ENCODE measurements at regions of chr4 and their contacts with region 1.

Region 1: GRCh38 chr4:12633053-12633651 is 851.0 kb downstream of the RAB28 start:
- DNase-seq: peak; percentile 85
- H3K4me3 ChIP-seq: no peak overlapping the region
- H3K27ac ChIP-seq: no peak overlapping the region
- H3K4me1 ChIP-seq: no peaks in the 10 kb centered on the region
- H3K27me3 ChIP-seq: no peaks in the 10 kb centered on the region
- CTCF ChIP-seq: peak; percentile 80 to 91 (median 89)
- EP300 ChIP-seq: no peak
- POLR2A ChIP-seq: no peak

Region 2: DNA sequence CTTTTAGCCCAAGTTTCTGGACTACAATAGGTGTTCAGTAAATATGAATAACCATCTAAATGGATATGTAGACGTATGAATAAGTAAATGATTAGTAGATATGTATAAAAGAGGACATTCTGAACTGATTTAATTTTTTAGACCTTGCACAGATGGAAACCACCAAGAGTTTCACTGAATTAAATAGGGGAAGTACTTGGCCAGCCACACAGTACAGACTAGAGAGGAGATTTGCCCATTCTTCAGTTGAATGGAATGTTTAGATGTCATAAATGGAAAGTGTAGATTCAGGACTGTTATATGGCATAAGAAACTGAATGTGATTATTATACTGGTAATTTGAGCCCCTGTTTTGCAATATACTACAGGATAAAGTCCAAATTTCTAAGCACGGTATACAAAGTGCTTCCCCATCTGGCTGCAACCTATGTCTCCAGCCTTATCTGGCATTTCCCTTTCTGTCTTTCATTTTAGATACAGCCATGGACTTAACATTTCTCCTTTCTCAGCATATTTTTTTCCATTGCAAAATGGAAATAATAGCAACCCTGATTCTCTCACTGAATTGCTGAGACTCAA is 1066.6 kb before region 1 on chr4:
- in situ Hi-C with region 1: no loop called
- intact Hi-C with region 1: loop called (anchors 10 kb)
- DNase-seq: no peak
- H3K4me3 ChIP-seq: no peak overlapping the region
- H3K27ac ChIP-seq: no peak overlapping the region
- H3K4me1 ChIP-seq: peaks cover 0 to 19% (median 3%) of the 10 kb centered on the region in 4 donors
- H3K27me3 ChIP-seq: no peaks in the 10 kb centered on the region
- CTCF ChIP-seq: no peak
- EP300 ChIP-seq: no peak
- POLR2A ChIP-seq: no peak

Region 3: DNA sequence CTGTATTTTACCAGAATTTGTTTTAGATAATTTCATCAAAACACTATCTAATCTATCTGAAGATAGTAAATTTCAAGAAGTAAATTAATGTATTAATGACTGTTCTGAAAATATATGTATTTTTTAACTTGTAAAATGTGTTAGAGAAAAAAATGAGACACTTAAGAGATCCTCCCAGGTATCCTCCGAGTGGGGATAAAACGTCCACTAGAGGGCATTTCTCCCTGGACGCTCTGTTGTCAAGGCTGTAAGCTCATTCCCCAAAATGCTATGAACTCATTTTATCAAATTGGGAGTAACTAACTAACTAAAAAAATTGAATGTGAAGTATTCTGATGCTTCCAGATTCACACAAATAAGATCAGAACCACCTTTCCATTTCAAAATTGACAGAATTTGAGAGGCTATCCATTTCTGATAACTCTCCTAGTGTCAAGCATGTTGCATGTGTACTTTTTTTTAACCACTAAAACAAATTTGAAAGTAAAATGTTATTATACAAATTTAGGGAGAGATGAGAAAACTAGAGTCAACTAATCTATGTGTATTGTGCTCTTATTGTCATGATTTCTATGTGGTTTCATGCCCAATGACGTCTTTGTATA is 867.2 kb before region 1 on chr4:
- in situ Hi-C with region 1: loop called in 3 of 4 experiments (anchors 25 kb)
- intact Hi-C with region 1: no loop called
- DNase-seq: peak; percentile 14
- H3K4me3 ChIP-seq: no peak overlapping the region
- H3K27ac ChIP-seq: no peak overlapping the region
- H3K4me1 ChIP-seq: no peaks in the 10 kb centered on the region
- H3K27me3 ChIP-seq: no peaks in the 10 kb centered on the region
- CTCF ChIP-seq: peak; percentile 55 to 77 (median 67)
- EP300 ChIP-seq: no peak
- POLR2A ChIP-seq: no peak

Region 4: GRCh38 chr4:12041828-12042227 is 591.3 kb before region 1 on chr4:
- in situ Hi-C with region 1: loop called in 2 of 4 experiments (anchors 10 to 25 kb)
- intact Hi-C with region 1: no loop called
- DNase-seq: no peak
- H3K4me3 ChIP-seq: no peak overlapping the region
- H3K27ac ChIP-seq: no peak overlapping the region
- H3K4me1 ChIP-seq: no peaks in the 10 kb centered on the region
- H3K27me3 ChIP-seq: no peaks in the 10 kb centered on the region
- CTCF ChIP-seq: peak in 4 of 5 experiments; percentile 19 to 37 (median 29)
- EP300 ChIP-seq: no peak
- POLR2A ChIP-seq: no peak

Region 5: DNA sequence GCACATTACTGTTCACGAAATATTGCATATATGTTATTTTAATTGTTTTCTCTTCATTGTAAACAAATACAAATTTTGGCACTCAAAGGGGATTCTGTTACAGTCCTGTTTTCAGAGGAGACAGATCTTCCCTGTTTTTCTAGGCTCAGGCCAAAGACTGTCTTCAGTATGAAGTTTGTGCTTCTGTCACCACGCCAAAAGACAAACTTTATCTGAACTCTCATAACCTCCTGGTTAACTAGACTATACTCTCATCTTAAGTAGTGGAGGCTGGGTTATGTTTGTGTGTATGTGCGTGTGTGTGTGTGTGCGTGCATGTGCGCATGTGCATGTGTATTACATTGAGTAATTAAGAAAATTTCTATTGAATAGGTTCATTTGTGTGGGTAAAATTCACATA is 527.6 kb before region 1 on chr4:
- in situ Hi-C with region 1: no loop called
- intact Hi-C with region 1: no loop called
- DNase-seq: no peak
- H3K4me3 ChIP-seq: no peak overlapping the region
- H3K27ac ChIP-seq: no peak overlapping the region
- H3K4me1 ChIP-seq: no peaks in the 10 kb centered on the region
- H3K27me3 ChIP-seq: no peaks in the 10 kb centered on the region
- CTCF ChIP-seq: no peak
- EP300 ChIP-seq: no peak
- POLR2A ChIP-seq: no peak